ENCODE measurements at regions of chr12 and their contacts with region 1.

Region 1: DNA sequence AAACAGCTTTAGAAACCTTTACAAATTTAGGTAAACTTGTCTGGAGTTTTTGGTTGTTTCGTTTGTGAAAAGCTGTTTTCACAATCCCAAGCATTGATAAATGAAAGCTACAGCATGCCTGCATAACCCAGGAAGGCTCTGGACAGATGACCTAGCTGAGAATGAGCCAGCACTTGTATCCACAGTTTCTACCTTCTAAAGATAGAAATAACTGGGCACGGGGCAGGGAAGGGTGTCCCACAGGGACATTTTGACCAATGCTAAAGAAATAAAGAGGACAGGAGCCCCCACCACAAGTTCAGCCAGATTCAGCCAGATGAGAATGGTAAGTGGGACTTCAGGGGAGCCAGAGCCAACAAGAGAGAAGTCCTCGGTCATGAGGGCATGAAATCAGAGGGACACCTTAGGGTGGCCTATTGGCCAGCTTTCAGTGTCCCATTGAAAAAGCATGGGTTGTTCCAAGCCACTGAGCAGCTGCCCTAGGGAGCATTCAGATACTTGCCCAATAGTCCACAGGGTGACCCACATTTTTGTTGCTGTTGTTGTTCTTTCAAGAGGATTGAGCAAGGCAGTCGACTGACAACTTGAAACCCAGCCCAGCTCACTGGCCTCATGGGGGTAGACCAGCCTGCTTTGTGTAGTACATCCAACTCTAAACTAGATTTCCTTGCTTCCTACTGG is 140.3 kb upstream of the NUDT4 start:
- DNase-seq: peak; percentile 66 to 87
- H3K4me3 ChIP-seq: peak overlapping the region in 1 of 2 donors; percentile 3
- H3K27ac ChIP-seq: peak overlapping the region; percentile 66 to 81
- H3K4me1 ChIP-seq: peaks cover 2 to 6% of the 10 kb centered on the region in 2 donors
- H3K27me3 ChIP-seq: no peaks in the 10 kb centered on the region
- CTCF ChIP-seq: no peak

Region 2: GRCh38 chr12:93089805-93090569 is 147.4 kb before region 1 on chr12:
- intact Hi-C with region 1: no loop called
- DNase-seq: no peak
- H3K4me3 ChIP-seq: no peak overlapping the region
- H3K27ac ChIP-seq: no peak overlapping the region
- H3K4me1 ChIP-seq: no peaks in the 10 kb centered on the region
- H3K27me3 ChIP-seq: no peaks in the 10 kb centered on the region
- CTCF ChIP-seq: no peak

Region 3: GRCh38 chr12:93156094-93156716 is 81.2 kb before region 1 on chr12:
- intact Hi-C with region 1: no loop called
- DNase-seq: no peak
- H3K4me3 ChIP-seq: no peak overlapping the region
- H3K27ac ChIP-seq: no peak overlapping the region
- H3K4me1 ChIP-seq: peaks cover 0 to 8% of the 10 kb centered on the region in 2 donors
- H3K27me3 ChIP-seq: no peaks in the 10 kb centered on the region
- CTCF ChIP-seq: no peak

Region 4: GRCh38 chr12:93191956-93192355 is 45.4 kb before region 1 on chr12:
- intact Hi-C with region 1: loop called (anchors 5 kb)
- DNase-seq: peak; percentile 19 to 86
- H3K4me3 ChIP-seq: peak overlapping the region; percentile 28 to 29
- H3K27ac ChIP-seq: peak overlapping the region; percentile 71 to 83
- H3K4me1 ChIP-seq: peaks cover 0 to 17% of the 10 kb centered on the region in 2 donors
- H3K27me3 ChIP-seq: no peaks in the 10 kb centered on the region
- CTCF ChIP-seq: no peak